Posterior cingulate gyrus (tissue), 11 donors: ENCODE measurements at regions of chr12 and their contacts with region 1.

Region 1: GRCh38 chr12:116277393-116278278 is at the start of gene MED13L:
- DNase-seq: peak; percentile 74 to 98 (median 84)

Region 2: GRCh38 chr12:116236148-116236731 is 41.4 kb before region 1 on chr12:
- intact Hi-C with region 1: loop called (anchors 5 kb)
- DNase-seq: peak in 5 of 10 donors; percentile 36 to 82 (median 51)

Region 3: GRCh38 chr12:116533343-116534251 is 256.0 kb after region 1 on chr12:
- intact Hi-C with region 1: loop called (anchors 5 kb)
- DNase-seq: peak; percentile 61 to 97 (median 84)

Region 4: GRCh38 chr12:116599285-116600136 is 321.9 kb after region 1 on chr12:
- intact Hi-C with region 1: loop called (anchors 5 kb)
- DNase-seq: peak; percentile 26 to 94 (median 70)

Region 5: DNA sequence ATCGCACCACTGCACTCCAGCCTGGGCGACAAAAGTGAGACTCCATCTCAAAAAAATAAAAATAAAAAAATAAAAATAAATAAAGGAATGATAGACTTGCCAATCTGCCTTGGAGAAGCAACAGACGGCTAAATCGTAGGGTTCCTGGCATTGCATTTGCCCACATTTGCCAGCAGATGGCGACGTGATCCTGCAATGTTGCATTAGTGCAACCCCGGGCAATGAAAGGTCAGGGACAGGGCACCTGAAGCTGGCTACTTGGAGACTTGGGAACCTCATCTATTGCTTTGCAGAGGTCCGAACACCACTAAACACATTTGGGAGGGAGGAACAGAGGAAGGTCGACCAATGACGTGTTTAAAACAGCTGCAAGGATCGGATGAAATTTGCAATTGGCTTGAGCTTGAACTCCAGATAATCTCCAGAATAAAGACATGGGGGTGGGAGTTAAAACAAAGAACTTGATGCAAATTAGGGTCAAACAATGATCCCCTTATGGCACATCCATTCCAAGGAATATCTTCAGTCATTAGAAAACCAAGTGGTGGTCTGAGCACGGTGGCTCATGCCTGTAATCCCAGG is 425.7 kb after region 1 on chr12:
- intact Hi-C with region 1: loop called (anchors 10 kb)
- DNase-seq: peak in 9 of 10 donors; percentile 49 to 95 (median 78)